ENCODE measurements at regions of chr19 and their contacts with region 1.

Region 1: DNA sequence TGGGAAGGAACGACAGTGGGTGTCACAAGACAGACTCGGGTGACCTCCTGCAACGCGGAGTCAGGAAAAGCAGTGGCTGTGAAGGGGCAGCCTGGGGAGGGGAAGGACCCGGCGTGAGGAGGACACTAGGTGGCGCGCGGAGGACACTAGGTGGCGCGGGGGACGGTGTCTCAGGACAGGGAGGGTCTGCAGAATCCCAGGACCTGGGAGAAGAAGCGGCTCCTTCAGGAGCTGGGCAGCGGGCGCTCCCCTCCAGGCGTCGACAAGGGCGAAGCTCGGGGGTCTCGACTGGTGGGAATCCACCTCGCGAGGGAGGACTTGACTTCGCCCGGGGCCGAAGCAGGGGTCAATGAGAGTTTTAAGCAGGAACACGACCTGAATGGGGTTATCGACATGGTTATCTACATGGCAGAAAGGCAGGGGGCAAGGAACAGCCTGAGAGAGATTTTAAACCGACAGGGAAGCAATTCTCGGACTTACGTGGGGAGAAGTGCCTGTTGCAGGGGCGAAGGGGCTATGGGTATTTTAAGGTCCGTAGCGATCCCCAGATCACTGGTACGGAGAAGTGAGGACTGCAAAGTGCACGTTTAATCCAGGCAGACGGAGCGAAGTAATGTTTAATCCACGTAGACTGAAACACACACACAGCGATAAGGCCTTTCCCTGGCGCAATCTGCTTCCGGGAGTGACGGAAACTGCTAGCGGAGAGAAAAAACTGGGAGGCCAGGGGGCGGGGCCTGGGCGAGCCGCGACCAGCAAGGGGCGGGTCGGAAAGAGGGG is at the start of gene ZNF616:
- DNase-seq: peak; percentile 96 to 97
- ATAC-seq: peak; percentile 47 to 72 (median 57)
- H3K4me3 ChIP-seq: peak within 1 kb of the TSS; percentile 88
- H3K4me3 Mint-ChIP-seq: peak within 1 kb of the TSS; percentile 94
- H3K27ac ChIP-seq: peak within 1 kb of the TSS; percentile 74
- H3K27ac Mint-ChIP-seq: peak within 1 kb of the TSS; percentile 94 to 98
- H3K4me1 ChIP-seq: peaks cover 31% of the 10 kb centered on the region
- H3K4me1 Mint-ChIP-seq: peaks cover 38 to 54% of the 10 kb centered on the region in 2 donors
- H3K27me3 ChIP-seq: no peaks in the 10 kb centered on the region
- H3K27me3 Mint-ChIP-seq: no peaks in the 10 kb centered on the region
- CTCF ChIP-seq: peak; percentile 82
- total RNA-seq, gene ZNF616: 3.8 to 7.1 (median 4.8) TPM

Region 2: DNA sequence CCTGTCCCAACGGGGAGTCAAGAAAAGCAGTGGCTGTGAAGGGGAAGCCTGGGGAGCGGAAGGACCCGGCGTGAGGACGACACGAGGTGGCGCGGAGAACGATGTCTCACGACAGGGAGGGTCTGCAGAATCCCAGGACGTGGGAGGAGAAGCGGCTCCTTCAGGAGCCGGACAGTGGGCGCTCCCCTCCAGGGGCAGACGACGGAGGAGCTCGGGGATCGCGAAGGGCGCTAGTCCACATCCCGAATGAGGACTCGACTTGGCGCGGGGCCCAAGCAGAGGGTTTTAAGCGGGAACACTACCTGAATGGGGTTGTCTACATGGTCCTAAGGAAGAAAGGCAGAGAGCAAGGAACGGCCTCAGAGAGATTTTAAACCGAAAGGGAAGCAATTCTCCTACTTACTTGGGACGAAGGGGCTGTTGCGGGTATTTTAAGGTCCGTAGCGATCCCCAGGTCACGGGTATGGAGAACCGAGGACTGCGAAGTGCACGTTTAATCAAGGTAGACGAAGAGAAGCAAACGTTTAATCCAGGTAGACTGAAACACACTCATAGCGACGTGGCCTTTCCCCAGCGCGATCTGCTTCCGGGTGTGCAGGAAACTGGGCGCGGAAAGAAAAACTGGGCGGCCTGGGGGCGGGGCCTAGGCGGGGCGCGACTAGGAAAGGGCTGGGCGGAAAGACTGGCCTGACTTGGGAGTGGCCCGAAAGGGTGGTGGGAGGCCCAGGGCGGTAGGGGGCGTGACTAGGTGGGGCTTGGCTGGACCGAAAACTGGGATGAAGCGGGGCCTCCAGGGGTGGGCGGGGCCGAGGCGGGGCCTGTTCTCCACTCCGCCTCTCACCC is 44.0 kb before region 1 on chr19 and contains the start of gene ZNF841:
- intact Hi-C with region 1: loop called (anchors 5 kb)
- DNase-seq: peak; percentile 84 to 86
- ATAC-seq: peak; percentile 94 to 97 (median 97)
- H3K4me3 ChIP-seq: peak within 1 kb of the TSS; percentile 98
- H3K4me3 Mint-ChIP-seq: peak within 1 kb of the TSS; percentile 99
- H3K27ac ChIP-seq: peak within 1 kb of the TSS; percentile 77
- H3K27ac Mint-ChIP-seq: peak within 1 kb of the TSS; percentile 91 to 94
- H3K4me1 ChIP-seq: peaks cover 17% of the 10 kb centered on the region
- H3K4me1 Mint-ChIP-seq: peaks cover 49% of the 10 kb centered on the region in 2 donors
- H3K27me3 ChIP-seq: no peaks in the 10 kb centered on the region
- H3K27me3 Mint-ChIP-seq: no peaks in the 10 kb centered on the region
- CTCF ChIP-seq: no peak
- total RNA-seq, gene ZNF841: 32.4 to 47.7 (median 47.4) TPM

Region 3: DNA sequence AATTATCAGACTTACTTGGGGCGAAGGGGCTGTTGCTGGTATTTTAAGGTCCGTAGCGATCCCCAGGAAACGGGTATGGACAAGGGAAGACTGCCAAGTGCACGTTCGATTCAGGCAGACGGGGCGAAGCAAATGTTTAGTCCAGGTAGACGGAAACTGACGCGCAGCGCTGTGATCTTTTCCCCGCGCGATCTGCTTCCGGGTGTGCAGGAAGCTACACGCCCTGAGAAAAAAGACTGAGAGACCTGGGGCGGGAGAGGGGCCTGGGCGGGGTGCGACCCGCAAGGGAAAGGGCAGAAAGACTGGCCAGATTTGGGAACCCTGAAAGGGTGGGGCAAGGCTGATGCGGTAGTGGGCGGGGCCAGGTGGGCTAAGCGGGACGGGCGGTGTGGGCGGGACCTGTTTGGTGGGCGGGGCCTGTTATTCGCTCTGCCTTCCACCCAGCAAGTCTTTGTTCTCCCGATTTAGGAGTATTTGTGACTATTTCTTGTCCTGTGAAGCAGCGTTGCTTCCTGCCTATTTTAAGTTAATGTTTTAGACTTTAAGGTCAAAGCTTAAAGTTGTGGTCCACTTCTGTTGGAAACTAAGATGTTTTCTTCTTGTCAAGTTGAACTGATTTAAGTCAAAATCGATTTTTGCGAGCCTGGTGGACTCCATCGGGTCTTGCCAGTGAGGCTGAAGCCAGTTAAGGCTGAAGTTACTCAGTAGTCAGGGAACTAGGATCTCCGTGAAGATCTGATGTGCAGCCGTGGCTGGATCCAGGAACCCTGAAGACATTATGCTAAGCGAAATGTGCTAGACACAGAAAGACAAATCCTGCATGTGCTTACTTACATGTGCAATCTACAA is 32.1 kb after region 1 on chr19 and contains the start of gene ZNF836:
- intact Hi-C with region 1: loop called (anchors 2 kb)
- DNase-seq: peak; percentile 79 to 95
- ATAC-seq: peak; percentile 89 to 93 (median 89)
- H3K4me3 ChIP-seq: peak within 1 kb of the TSS; percentile 83
- H3K4me3 Mint-ChIP-seq: peak within 1 kb of the TSS; percentile 99
- H3K27ac ChIP-seq: peak within 1 kb of the TSS; percentile 80
- H3K27ac Mint-ChIP-seq: peak within 1 kb of the TSS; percentile 87 to 97
- H3K4me1 ChIP-seq: peaks cover 45% of the 10 kb centered on the region
- H3K4me1 Mint-ChIP-seq: peaks cover 42 to 45% of the 10 kb centered on the region in 2 donors
- H3K27me3 ChIP-seq: no peaks in the 10 kb centered on the region
- H3K27me3 Mint-ChIP-seq: no peaks in the 10 kb centered on the region
- CTCF ChIP-seq: no peak
- total RNA-seq, gene ZNF836: 27.9 to 40.2 (median 28.0) TPM

Region 4: GRCh38 chr19:52189735-52190486 is 50.5 kb after region 1 on chr19 and contains the start of gene PPP2R1A:
- intact Hi-C with region 1: loop called (anchors 1 kb)
- DNase-seq: peak; percentile 97 to 100
- ATAC-seq: peak; percentile 84 to 93 (median 85)
- H3K4me3 ChIP-seq: peak within 1 kb of the TSS; percentile 61
- H3K4me3 Mint-ChIP-seq: peak within 1 kb of the TSS; percentile 99
- H3K27ac ChIP-seq: peak within 1 kb of the TSS; percentile 87
- H3K27ac Mint-ChIP-seq: peak within 1 kb of the TSS; percentile 99
- H3K4me1 ChIP-seq: peaks cover 36% of the 10 kb centered on the region
- H3K4me1 Mint-ChIP-seq: peaks cover 51 to 57% of the 10 kb centered on the region in 2 donors
- H3K27me3 ChIP-seq: no peaks in the 10 kb centered on the region
- H3K27me3 Mint-ChIP-seq: no peaks in the 10 kb centered on the region
- CTCF ChIP-seq: no peak
- total RNA-seq, gene PPP2R1A: 221 to 256 (median 232) TPM

Region 5: DNA sequence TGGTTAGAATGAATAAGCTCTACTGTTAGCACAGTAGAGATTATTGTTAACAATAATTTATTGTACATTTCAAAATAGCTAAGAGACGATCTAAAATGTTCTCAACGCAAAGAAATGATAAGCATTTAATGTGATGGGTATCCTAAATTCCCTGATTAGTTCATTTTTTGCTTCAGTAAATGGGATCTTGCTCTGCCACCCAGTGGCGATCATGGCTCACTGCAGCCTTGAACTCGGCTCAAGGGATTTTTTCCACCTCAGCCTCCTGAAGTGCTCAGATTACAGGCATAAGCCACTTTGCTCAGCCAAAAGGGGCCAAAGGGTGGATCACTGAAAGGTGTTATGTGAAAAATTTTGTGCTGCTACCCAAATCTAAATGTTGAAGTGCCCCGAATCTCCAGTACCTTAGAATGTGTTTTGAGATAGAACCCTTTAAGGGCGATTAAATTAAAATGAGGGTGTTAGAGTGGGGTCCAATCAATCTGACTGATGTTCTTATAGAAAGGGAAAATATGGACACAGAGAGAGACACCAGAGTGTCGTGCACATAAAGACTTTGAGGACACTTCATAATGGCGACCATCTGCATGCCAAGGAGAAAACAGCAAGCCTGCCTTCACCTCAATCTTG is 98.4 kb after region 1 on chr19:
- intact Hi-C with region 1: loop called (anchors 1 kb)
- DNase-seq: peak; percentile 52 to 80
- ATAC-seq: peak; percentile 86 to 99 (median 89)
- H3K4me3 ChIP-seq: no peak overlapping the region
- H3K4me3 Mint-ChIP-seq: no peak overlapping the region
- H3K27ac ChIP-seq: no peak overlapping the region
- H3K27ac Mint-ChIP-seq: no peak overlapping the region
- H3K4me1 ChIP-seq: no peaks in the 10 kb centered on the region
- H3K4me1 Mint-ChIP-seq: no peaks in the 10 kb centered on the region
- H3K27me3 ChIP-seq: no peaks in the 10 kb centered on the region
- H3K27me3 Mint-ChIP-seq: peaks cover 0 to 3% of the 10 kb centered on the region in 2 donors
- CTCF ChIP-seq: peak; percentile 94

Measured in natural killer cell (primary cell).